ENCODE measurements at regions of chr10 and their contacts with region 1.

Region 1: GRCh38 chr10:74234569-74234968 is 83.5 kb downstream of the ADK start:
- DNase-seq: no peak
- ATAC-seq: peak in 1 of 4 donors; percentile 37
- H3K4me3 ChIP-seq: no peak overlapping the region
- H3K27ac ChIP-seq: no peak overlapping the region
- H3K4me1 ChIP-seq: no peaks in the 10 kb centered on the region
- H3K27me3 ChIP-seq: no peaks in the 10 kb centered on the region
- CTCF ChIP-seq: peak; percentile 27 to 46 (median 35)
- POLR2A ChIP-seq: no peak

Region 2: GRCh38 chr10:74120911-74121310 is 113.7 kb before region 1 on chr10:
- intact Hi-C with region 1: loop called in 1 of 2 experiments (anchors 10 kb)
- DNase-seq: no peak
- ATAC-seq: no peak
- H3K4me3 ChIP-seq: no peak overlapping the region
- H3K27ac ChIP-seq: no peak overlapping the region
- H3K4me1 ChIP-seq: no peaks in the 10 kb centered on the region
- H3K27me3 ChIP-seq: no peaks in the 10 kb centered on the region
- CTCF ChIP-seq: no peak
- POLR2A ChIP-seq: no peak